Calu3 (cell line): ENCODE measurements at regions of chr1 and their contacts with region 1.

Region 1: DNA sequence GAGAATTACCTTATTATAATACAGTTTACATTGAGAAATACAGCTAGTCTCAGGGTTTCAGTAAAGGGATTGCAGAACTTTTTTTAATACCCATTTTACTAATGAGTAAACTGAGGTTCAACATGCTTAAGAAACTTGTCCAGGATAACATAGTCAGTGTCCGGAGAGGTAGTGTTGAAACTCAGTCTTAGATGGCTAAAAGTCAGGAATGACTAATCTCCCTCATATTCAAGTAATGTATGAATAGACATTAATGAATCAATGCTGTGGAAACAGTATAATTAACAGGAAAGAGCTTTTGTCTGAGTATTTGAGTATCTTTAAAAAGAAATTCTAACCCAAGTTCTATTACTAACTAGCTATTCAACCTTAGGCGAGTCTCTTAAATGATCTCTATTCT is 397.6 kb downstream of the PLA2G4A start:
- DNase-seq: no peak
- H3K4me3 Mint-ChIP-seq: no peak overlapping the region
- H3K27ac Mint-ChIP-seq: no peak overlapping the region
- H3K4me1 Mint-ChIP-seq: no peaks in the 10 kb centered on the region
- H3K27me3 Mint-ChIP-seq: no peaks in the 10 kb centered on the region
- CTCF ChIP-seq: no peak

Region 2: DNA sequence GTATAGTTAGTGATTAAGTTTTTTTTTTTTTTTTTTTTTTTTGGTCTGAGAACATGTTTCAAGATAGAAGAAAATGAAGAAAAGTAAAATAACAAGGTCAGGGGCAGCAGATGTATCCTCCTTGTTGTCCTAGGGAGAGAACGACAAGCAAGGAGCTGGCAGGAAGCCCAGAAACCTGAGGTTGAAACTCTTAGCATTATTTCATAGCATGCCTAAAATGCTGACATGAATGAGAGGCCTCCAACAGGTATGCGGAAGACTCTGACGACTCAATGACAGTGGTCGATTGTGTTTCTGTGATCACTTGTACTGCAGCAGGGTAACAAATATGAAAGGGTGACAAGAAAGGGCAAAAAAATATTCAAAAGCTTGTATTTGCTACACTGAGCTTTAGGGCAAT is 18.2 kb after region 1 on chr1:
- CTCF ChIA-PET with region 1: interaction called, 15 read pairs
- intact Hi-C with region 1: no loop called
- DNase-seq: peak; percentile 65
- H3K4me3 Mint-ChIP-seq: no peak overlapping the region
- H3K27ac Mint-ChIP-seq: peak overlapping the region; percentile 15
- H3K4me1 Mint-ChIP-seq: no peaks in the 10 kb centered on the region
- H3K27me3 Mint-ChIP-seq: no peaks in the 10 kb centered on the region
- CTCF ChIP-seq: no peak

Region 3: DNA sequence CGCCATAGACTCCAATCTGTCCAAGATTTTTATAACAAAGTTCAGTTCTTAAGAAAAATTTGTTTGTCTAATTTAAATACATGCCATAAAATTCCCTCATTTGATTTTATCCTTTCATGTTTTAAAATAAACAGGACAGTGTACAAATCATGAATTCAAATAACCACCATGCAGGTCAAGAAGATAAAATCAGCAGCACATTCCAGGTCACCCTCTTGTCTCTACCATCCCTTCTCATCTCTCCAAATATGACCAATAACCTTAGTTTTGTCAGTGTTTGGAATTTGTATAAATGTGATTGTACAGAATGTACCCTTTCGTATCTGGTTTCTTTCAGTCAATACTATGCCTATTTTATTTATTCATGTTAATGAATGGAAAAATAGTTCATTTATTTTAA is 133.2 kb after region 1 on chr1:
- CTCF ChIA-PET with region 1: no interaction called
- intact Hi-C with region 1: no loop called
- DNase-seq: no peak
- H3K4me3 Mint-ChIP-seq: no peak overlapping the region
- H3K27ac Mint-ChIP-seq: no peak overlapping the region
- H3K4me1 Mint-ChIP-seq: no peaks in the 10 kb centered on the region
- H3K27me3 Mint-ChIP-seq: no peaks in the 10 kb centered on the region
- CTCF ChIP-seq: no peak